ENCODE measurements at regions of chr9 and their contacts with region 1.

Region 1: GRCh38 chr9:137302176-137302994 is at the start of gene NRARP:
- DNase-seq: peak; percentile 94 to 96 (median 95)
- ATAC-seq: peak; percentile 64
- H3K4me3 ChIP-seq: peak within 1 kb of the TSS; percentile 90
- H3K27ac ChIP-seq: peak within 1 kb of the TSS; percentile 88
- H3K4me1 ChIP-seq: peaks cover 27 to 84% of the 10 kb centered on the region in 2 experiments
- H3K27me3 ChIP-seq: no peaks in the 10 kb centered on the region
- CTCF ChIP-seq: peak; percentile 48 to 65 (median 61); a peak in 5 of 6 replicates
- EP300 ChIP-seq: no peak
- POLR2A ChIP-seq: peak; percentile 49; the same call in 1 of the 2 replicates
- RAD21 ChIP-seq: 0 out of 4 replicates have a peak, but pooled peaks of 1 of the 2 experiments have one; percentile 27
- polyA plus RNA-seq, gene NRARP: not detected

Region 2: GRCh38 chr9:137200311-137201204 is 101.8 kb before region 1 on chr9 and contains the start of gene TPRN:
- CTCF ChIA-PET with region 1: no interaction called
- POLR2A ChIA-PET with region 1: no interaction called
- in situ Hi-C with region 1: no loop called
- intact Hi-C with region 1: no loop called
- DNase-seq: peak; percentile 99 to 100 (median 100)
- ATAC-seq: peak; percentile 96
- H3K4me3 ChIP-seq: peak within 1 kb of the TSS; percentile 52
- H3K27ac ChIP-seq: peak within 1 kb of the TSS; percentile 75
- H3K4me1 ChIP-seq: peaks cover 31 to 86% of the 10 kb centered on the region in 2 experiments
- H3K27me3 ChIP-seq: no peaks in the 10 kb centered on the region
- CTCF ChIP-seq: no peak
- EP300 ChIP-seq: no peak
- POLR2A ChIP-seq: peak; percentile 88
- RAD21 ChIP-seq: no peak
- polyA plus RNA-seq, gene TPRN: 0.31 to 0.34 TPM

Region 3: GRCh38 chr9:137313956-137314560 is 11.7 kb after region 1 on chr9:
- CTCF ChIA-PET with region 1: no interaction called
- POLR2A ChIA-PET with region 1: interaction called, 10 read pairs
- in situ Hi-C with region 1: no loop called
- intact Hi-C with region 1: no loop called
- DNase-seq: peak in 1 of 4 experiments; percentile 10
- ATAC-seq: no peak
- H3K4me3 ChIP-seq: no peak overlapping the region
- H3K27ac ChIP-seq: no peak overlapping the region
- H3K4me1 ChIP-seq: peaks cover 16 to 96% of the 10 kb centered on the region in 2 experiments
- H3K27me3 ChIP-seq: no peaks in the 10 kb centered on the region
- CTCF ChIP-seq: no peak
- EP300 ChIP-seq: no peak
- POLR2A ChIP-seq: no peak
- RAD21 ChIP-seq: no peak

Region 4: GRCh38 chr9:137423004-137423874 is 120.9 kb after region 1 on chr9 and contains the starts of genes EXD3 and NOXA1:
- CTCF ChIA-PET with region 1: no interaction called
- POLR2A ChIA-PET with region 1: interaction called, 3 read pairs
- in situ Hi-C with region 1: no loop called
- intact Hi-C with region 1: loop called (anchors 10 kb)
- DNase-seq: peak; percentile 96 to 98 (median 98)
- ATAC-seq: peak; percentile 87
- H3K4me3 ChIP-seq: peak within 1 kb of the TSS; percentile 97
- H3K27ac ChIP-seq: peak within 1 kb of the TSS; percentile 72
- H3K4me1 ChIP-seq: peaks cover 35 to 50% of the 10 kb centered on the region in 2 experiments
- H3K27me3 ChIP-seq: no peaks in the 10 kb centered on the region
- CTCF ChIP-seq: peak; percentile 51 to 84 (median 77)
- EP300 ChIP-seq: 0 out of 2 replicates have a peak, but pooled peaks have one; percentile 3
- POLR2A ChIP-seq: no peak
- RAD21 ChIP-seq: peak; percentile 50 to 60
- polyA plus RNA-seq, gene EXD3: 0.29 to 0.35 TPM
- polyA plus RNA-seq, gene NOXA1: not detected

Region 5: GRCh38 chr9:137445275-137445807 is 143.0 kb after region 1 on chr9:
- CTCF ChIA-PET with region 1: interaction called, 4 read pairs
- POLR2A ChIA-PET with region 1: interaction called, 7 read pairs
- in situ Hi-C with region 1: no loop called
- intact Hi-C with region 1: loop called (anchors 5 kb)
- DNase-seq: peak; percentile 60 to 87 (median 71)
- ATAC-seq: peak; percentile 84
- H3K4me3 ChIP-seq: no peak overlapping the region
- H3K27ac ChIP-seq: no peak overlapping the region
- H3K4me1 ChIP-seq: peaks cover 8 to 54% of the 10 kb centered on the region in 2 experiments; a peak in 4 of 5 replicates
- H3K27me3 ChIP-seq: no peaks in the 10 kb centered on the region
- CTCF ChIP-seq: peak; percentile 92 to 93 (median 93)
- EP300 ChIP-seq: peak; percentile 19; the same call in 1 of the 2 replicates
- POLR2A ChIP-seq: no peak
- RAD21 ChIP-seq: peak; percentile 84 to 85

Region 6: DNA sequence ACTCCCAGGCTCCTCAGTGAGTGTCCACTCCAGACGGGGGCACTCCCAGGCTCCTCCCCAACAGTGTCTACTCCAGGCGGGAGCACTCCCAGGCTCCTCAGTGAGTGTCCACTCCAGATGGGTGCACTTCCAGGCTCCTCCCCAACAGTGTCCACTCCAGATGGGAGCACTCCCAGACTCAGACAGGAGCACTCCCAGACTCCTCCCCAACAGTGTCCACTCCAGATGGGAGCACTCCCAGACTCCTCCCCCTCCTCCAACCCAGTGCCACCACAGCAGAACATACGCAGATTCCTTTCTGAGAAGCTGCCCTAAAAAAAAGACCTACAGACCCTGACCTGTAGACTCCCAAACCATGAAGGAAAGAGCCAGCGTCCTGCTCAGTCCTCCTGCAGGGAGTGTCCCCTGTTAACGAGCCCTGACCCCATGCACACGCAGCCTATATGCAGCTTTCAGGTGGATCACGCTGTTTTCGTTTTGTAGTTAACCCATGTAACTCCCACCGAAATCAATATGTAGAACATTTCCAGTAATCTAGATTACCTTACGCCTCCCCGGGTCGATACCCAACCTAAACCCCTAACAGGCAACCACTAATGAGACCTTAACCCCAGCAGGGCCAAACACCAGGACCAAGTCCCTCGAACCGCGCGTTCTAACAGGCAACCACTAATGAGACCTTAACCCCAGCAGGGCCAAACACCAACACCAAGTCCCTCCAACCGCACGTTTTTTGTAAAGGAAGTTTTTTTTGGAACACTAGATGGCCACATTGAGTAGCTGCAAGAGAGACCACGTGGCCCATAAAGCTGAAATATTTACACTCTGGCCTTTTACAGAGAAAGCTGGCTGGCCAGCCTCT is 232.1 kb after region 1 on chr9:
- CTCF ChIA-PET with region 1: no interaction called
- POLR2A ChIA-PET with region 1: no interaction called
- in situ Hi-C with region 1: no loop called
- intact Hi-C with region 1: loop called (anchors 5 kb)
- DNase-seq: peak; percentile 56 to 86 (median 65)
- ATAC-seq: peak; percentile 92
- H3K4me3 ChIP-seq: no peak overlapping the region
- H3K27ac ChIP-seq: peak overlapping the region; percentile 11; the same call in 2 of the 3 replicates
- H3K4me1 ChIP-seq: peaks cover 11 to 19% of the 10 kb centered on the region in 2 experiments; a peak in 4 of 5 replicates
- H3K27me3 ChIP-seq: no peaks in the 10 kb centered on the region
- CTCF ChIP-seq: peak; percentile 78 to 85 (median 79)
- EP300 ChIP-seq: no peak
- POLR2A ChIP-seq: no peak
- RAD21 ChIP-seq: peak; percentile 26 to 50; a peak in 3 of 4 replicates

Region 7: GRCh38 chr9:137639303-137640051 is 337.1 kb after region 1 on chr9:
- CTCF ChIA-PET with region 1: no interaction called
- POLR2A ChIA-PET with region 1: no interaction called
- in situ Hi-C with region 1: no loop called
- intact Hi-C with region 1: no loop called
- DNase-seq: no peak
- ATAC-seq: no peak
- H3K4me3 ChIP-seq: no peak overlapping the region
- H3K27ac ChIP-seq: no peak overlapping the region; the same call in 2 of the 3 replicates
- H3K4me1 ChIP-seq: no peaks in the 10 kb centered on the region; a peak in 2 of 5 replicates
- H3K27me3 ChIP-seq: no peaks in the 10 kb centered on the region
- CTCF ChIP-seq: no peak
- EP300 ChIP-seq: no peak
- POLR2A ChIP-seq: no peak
- RAD21 ChIP-seq: no peak

Measured in K562 (cell line).